Endothelial cell of umbilical vein (primary cell): ENCODE measurements at regions of chr2 and their contacts with region 1.

Region 1: DNA sequence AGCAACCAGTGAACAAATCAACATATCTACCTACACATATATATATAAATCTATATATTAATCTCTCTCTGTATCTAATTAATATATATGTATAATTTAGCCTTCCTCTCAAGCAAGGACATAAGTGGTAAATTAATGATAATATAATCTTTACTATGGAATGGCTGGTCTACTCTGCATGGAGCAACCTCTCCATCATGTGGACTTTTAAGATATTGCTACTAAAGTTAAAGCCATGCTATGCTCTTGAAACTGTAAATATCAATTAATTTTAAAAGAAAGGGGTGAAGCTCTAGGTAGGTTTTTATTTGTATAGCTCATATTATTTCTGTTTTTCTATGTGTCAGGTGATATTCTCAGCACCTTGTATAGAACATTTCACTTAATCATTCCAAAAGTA is 147.0 kb downstream of the PPP1R1C start:
- DNase-seq: peak; percentile 65
- H3K4me3 ChIP-seq: no peak overlapping the region
- H3K27ac ChIP-seq: peak overlapping the region; percentile 83
- H3K4me1 ChIP-seq: peaks cover 29% of the 10 kb centered on the region
- H3K27me3 ChIP-seq: no peaks in the 10 kb centered on the region
- CTCF ChIP-seq: peak in 1 of 2 donors; percentile 25
- POLR2A ChIP-seq: no peak

Region 2: DNA sequence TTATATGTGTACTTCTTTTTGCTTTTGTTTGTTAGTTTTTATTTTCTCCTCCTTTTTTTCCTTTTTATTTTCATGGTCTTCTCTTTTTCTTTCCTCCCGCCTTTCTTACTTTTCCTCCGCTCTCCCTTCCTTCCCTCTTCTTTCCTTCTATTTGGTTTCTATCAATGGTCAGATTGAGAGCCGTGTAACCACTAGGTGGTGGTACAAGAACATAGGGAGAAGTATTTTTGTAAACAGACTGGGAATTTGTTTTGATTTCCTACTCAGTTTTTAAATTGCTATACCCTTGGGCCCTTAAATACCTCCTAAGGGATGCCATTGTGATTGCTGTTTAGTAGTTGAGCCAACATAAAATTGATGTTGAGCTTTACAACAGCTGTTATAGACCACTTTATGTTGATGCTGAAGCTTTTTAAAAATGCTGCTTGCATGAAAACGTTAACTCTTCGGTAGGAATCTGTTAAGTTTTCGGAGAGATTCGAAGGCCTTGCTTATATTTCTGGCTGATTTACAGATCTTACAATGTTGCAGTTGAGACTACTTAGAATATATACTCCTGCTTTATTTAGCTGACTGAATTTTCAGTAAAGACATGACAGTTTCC is 1028.0 kb before region 1 on chr2:
- CTCF ChIA-PET with region 1: interaction called, 5 read pairs
- POLR2A ChIA-PET with region 1: no interaction called
- dilution Hi-C with region 1: no loop called
- intact Hi-C with region 1: loop called (anchors 2 kb)
- DNase-seq: peak; percentile 57
- H3K4me3 ChIP-seq: no peak overlapping the region
- H3K27ac ChIP-seq: no peak overlapping the region
- H3K4me1 ChIP-seq: peaks cover 12% of the 10 kb centered on the region
- H3K27me3 ChIP-seq: no peaks in the 10 kb centered on the region
- CTCF ChIP-seq: peak; percentile 35 to 41
- POLR2A ChIP-seq: no peak

Region 3: DNA sequence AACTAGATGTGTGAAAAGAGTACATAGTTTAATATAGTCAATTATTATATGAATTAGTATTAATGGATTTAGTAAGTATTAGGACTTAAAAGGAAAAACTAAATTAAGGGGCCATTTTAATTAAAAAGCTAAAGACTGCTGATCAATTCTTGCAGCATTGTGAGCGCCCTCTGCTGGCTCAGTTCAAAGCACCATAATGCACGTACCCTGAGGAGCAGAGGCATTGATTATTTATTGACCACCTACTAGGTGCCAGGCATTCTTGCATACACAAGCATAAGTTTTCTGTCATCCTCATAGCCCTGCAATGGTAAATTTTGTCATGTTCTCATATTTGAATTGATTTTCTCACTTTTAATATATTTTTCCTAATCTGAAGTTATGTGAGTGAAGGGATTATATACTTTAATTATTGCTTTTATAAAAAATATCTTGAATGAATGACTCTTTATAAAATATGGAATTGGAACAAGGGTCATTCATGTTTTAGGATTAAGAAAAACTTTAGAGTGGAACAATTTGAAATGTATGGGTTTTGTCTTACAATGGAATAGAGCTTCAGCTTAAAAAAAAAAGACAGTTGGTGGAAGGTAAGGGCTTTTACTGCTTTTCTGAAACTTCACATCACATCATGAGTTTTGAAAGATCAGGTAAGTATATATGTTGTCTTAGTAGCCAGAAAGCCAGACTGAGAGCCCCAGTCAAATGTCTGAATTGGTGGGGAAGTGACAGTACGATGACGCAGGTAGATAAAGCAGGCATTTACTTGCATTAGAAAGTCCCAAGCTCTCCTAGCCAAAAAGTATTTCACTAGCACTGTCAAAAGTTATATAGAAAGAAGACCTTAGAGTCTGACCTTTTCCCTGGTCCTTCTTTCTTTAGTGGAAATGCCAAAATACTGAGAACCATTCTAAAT is 665.7 kb before region 1 on chr2:
- CTCF ChIA-PET with region 1: interaction called, 10 read pairs
- POLR2A ChIA-PET with region 1: no interaction called
- dilution Hi-C with region 1: no loop called
- intact Hi-C with region 1: no loop called
- DNase-seq: peak; percentile 41
- H3K4me3 ChIP-seq: no peak overlapping the region
- H3K27ac ChIP-seq: no peak overlapping the region
- H3K4me1 ChIP-seq: no peaks in the 10 kb centered on the region
- H3K27me3 ChIP-seq: peaks cover 4 to 10% of the 10 kb centered on the region in 2 experiments
- CTCF ChIP-seq: peak; percentile 69 to 70
- POLR2A ChIP-seq: no peak

Region 4: DNA sequence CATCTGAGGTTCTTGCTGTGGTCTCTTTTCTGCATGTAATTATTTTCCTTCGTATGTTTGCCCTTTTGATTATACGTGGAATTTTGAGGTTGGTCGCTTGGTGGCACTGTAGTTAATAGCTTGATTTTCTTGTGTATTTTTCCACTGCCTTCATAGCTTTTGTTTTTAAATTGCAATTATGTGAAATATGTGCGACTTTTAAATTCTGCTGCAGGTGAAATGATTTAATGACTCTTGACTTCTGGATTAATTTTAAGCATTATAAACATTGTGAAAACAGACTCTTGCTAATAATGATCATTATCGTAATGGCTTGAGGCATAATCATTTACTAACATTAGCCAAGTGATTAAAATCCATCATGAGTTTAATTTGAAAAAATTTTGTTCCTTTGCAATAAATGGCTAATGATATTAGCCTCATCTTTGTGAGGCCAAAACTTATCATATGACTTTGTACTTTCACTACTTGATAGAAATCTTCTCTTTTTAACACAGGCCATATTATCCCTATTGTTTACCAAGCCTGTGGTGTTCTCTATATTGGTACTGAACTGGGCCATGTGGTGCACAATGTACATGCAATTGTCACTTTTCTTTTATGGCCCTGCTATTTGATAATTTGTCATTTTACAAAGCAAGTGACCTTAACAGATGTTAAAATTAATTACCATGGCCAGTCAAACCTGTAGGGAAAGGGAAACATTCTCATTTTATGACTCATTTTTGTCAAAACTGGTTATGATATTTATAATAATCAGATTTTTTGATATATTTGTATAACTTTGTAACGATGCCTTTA is 389.5 kb before region 1 on chr2:
- CTCF ChIA-PET with region 1: interaction called, 21 read pairs
- POLR2A ChIA-PET with region 1: no interaction called
- dilution Hi-C with region 1: no loop called
- intact Hi-C with region 1: loop called (anchors 2 kb)
- DNase-seq: peak; percentile 83
- H3K4me3 ChIP-seq: no peak overlapping the region
- H3K27ac ChIP-seq: peak overlapping the region; percentile 34
- H3K4me1 ChIP-seq: peaks cover 15% of the 10 kb centered on the region
- H3K27me3 ChIP-seq: no peaks in the 10 kb centered on the region
- CTCF ChIP-seq: peak; percentile 37 to 39
- POLR2A ChIP-seq: no peak

Region 5: GRCh38 chr2:182066400-182067087 is 66.1 kb before region 1 on chr2:
- CTCF ChIA-PET with region 1: no interaction called
- POLR2A ChIA-PET with region 1: no interaction called
- dilution Hi-C with region 1: no loop called
- intact Hi-C with region 1: loop called (anchors 2 kb)
- DNase-seq: peak; percentile 91
- H3K4me3 ChIP-seq: no peak overlapping the region
- H3K27ac ChIP-seq: no peak overlapping the region
- H3K4me1 ChIP-seq: peaks cover 25% of the 10 kb centered on the region
- H3K27me3 ChIP-seq: no peaks in the 10 kb centered on the region
- CTCF ChIP-seq: no peak
- POLR2A ChIP-seq: no peak

Region 6: GRCh38 chr2:182144777-182145165 is 12.2 kb after region 1 on chr2:
- CTCF ChIA-PET with region 1: interaction called, 18 read pairs
- POLR2A ChIA-PET with region 1: no interaction called
- dilution Hi-C with region 1: no loop called
- intact Hi-C with region 1: loop called (anchors 1 kb)
- DNase-seq: peak; percentile 84
- H3K4me3 ChIP-seq: no peak overlapping the region
- H3K27ac ChIP-seq: peak overlapping the region; percentile 91
- H3K4me1 ChIP-seq: peaks cover 17% of the 10 kb centered on the region
- H3K27me3 ChIP-seq: no peaks in the 10 kb centered on the region
- CTCF ChIP-seq: no peak
- POLR2A ChIP-seq: no peak